ENCODE measurements at regions of chr10 and their contacts with region 1.

Region 1: GRCh38 chr10:14837757-14838581 is at the starts of genes CDNF, HSPA14 and MSANTD7:
- DNase-seq: peak; percentile 99
- H3K4me3 Mint-ChIP-seq: peak within 1 kb of the TSS; percentile 91
- H3K27ac Mint-ChIP-seq: peak within 1 kb of the TSS; percentile 91
- H3K4me1 Mint-ChIP-seq: peaks cover 23% of the 10 kb centered on the region
- H3K27me3 Mint-ChIP-seq: no peaks in the 10 kb centered on the region

Region 2: DNA sequence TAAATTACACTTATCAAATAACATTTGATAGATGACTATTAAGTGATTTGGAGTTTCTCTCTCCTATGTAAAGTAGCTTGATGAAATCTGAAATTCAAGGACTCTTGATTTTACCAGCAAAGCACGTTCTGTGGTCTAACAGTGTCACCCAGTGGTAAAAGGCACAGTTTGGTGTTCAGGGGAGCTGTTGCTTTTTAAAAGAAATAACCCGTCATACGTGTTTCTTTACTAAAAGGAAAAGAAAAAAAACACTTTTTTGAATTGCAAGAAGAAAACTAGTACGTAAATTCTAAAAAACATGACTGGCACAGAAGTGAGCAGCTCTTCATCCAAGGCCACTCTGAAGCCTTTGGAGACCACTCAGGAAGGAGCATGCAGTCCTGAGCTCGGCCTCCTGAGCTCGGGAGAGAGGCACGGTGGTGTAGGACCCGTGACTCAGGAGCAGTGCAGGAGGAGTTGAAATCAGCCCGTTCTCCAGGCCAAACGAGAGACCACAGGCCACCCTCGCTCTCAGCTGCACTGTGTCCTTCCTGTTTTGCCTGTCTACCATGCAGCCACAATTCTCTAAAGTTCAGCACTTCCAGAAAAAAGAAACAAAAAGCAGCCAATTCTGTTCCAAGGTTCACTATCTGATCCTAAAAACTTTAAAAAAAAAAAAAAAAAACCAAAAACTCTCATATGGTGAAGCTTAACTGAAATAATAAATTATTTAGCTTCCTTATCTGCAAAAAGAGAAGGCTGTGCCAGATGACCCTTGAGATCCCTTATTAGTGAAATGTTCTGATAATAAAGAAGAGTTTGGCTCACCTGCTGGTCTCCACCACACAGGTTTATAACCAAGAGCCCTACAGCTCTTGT is 294.7 kb before region 1 on chr10:
- CTCF ChIA-PET with region 1: interaction called, 10 read pairs
- DNase-seq: peak; percentile 59
- H3K4me3 Mint-ChIP-seq: peak overlapping the region; percentile 36
- H3K27ac Mint-ChIP-seq: peak overlapping the region; percentile 90
- H3K4me1 Mint-ChIP-seq: peaks cover 80% of the 10 kb centered on the region
- H3K27me3 Mint-ChIP-seq: no peaks in the 10 kb centered on the region

Region 3: GRCh38 chr10:14878266-14879054 is 40.5 kb after region 1 on chr10 and contains the start of gene SUV39H2:
- CTCF ChIA-PET with region 1: interaction called, 10 read pairs
- DNase-seq: peak; percentile 95
- H3K4me3 Mint-ChIP-seq: peak within 1 kb of the TSS; percentile 95
- H3K27ac Mint-ChIP-seq: peak within 1 kb of the TSS; percentile 89
- H3K4me1 Mint-ChIP-seq: peaks cover 53% of the 10 kb centered on the region
- H3K27me3 Mint-ChIP-seq: no peaks in the 10 kb centered on the region

Region 4: DNA sequence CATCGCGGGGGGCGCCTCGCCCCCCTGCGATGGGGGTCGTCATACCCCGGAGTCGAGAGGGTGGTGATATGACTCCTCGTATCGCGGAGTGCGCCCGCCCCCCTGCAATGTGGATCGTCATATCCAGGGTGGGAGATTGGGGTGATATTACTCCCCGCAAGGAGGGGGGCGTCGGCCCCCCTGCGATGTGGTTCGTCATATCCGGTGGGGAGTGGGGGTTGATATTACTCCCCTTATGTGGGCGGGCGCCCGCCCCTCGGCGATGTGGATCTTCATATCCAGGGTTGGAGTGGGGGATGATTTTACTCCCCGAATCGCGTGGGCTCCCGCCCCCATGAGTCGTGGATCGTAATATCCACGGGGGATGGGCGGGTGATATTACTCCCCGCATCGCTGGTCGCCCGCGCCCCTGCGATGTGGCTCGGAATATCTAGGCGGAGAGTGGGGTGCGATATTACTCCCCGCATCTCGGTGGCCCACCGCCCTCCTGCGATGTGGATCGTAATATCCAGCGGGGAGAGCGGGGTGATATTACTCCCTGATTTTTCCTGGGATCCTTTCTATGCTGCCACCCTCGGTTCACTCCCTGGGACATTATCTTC is 158.1 kb after region 1 on chr10:
- CTCF ChIA-PET with region 1: no interaction called
- DNase-seq: no peak
- H3K4me3 Mint-ChIP-seq: no peak overlapping the region
- H3K27ac Mint-ChIP-seq: no peak overlapping the region
- H3K4me1 Mint-ChIP-seq: peaks cover 3% of the 10 kb centered on the region
- H3K27me3 Mint-ChIP-seq: peaks cover 24% of the 10 kb centered on the region